ENCODE measurements at regions of chr12 and their contacts with region 1.

Region 1: GRCh38 chr12:52069327-52070184 is at the start of gene ATG101:
- DNase-seq: peak; percentile 96
- H3K4me3 ChIP-seq: peak within 1 kb of the TSS; percentile 82 to 90
- H3K27ac ChIP-seq: peak within 1 kb of the TSS; percentile 87 to 94
- H3K4me1 ChIP-seq: peaks cover 10 to 24% of the 10 kb centered on the region in 2 experiments; a peak in 1 of 4 replicates
- H3K27me3 ChIP-seq: no peaks in the 10 kb centered on the region
- CTCF ChIP-seq: peak; percentile 74
- EP300 ChIP-seq: peak; percentile 20 to 62; a peak in 2 of 4 replicates
- RAD21 ChIP-seq: no peak; the same call in 1 of the 2 replicates
- polyA plus RNA-seq, gene ATG101: 160 and 170 TPM in 2 replicates

Region 2: DNA sequence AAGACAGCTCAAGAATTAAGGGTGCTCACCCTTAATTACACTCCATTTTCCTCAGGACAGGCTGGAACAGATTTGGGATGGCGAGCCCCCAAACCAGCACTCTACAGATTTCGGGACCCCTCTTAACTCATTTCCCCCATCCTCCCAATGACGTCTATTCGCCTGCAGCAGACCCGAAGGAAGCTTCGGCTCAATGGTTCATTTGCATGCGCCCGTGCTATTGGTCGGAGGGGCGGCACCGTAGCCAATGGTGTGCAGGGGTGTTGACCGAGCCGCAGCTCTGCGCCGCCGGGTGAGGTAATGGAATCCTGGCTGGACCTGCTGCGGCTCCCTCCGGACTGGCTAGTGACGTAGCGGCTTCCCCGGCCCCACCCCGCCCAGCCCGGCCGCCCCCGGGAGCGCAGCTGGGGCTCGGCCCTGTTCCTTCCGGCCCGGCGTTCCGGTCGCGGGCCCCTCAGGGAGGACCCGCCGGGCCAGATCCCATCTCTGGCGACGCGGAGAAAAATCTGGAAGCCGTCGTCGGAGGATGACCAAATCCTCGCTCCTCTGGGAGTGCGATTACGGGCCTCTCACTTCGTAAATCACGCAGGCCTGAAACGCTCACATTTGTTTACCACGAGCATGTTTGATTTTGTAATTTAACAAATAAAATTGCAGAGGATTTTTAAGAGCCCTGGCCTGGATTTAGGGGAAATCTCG is 36.6 kb before region 1 on chr12:
- CTCF ChIA-PET with region 1: interaction called, 949 read pairs
- POLR2A ChIA-PET with region 1: interaction called, 10 read pairs
- DNase-seq: peak; percentile 96
- H3K4me3 ChIP-seq: peak overlapping the region; percentile 46 to 53
- H3K27ac ChIP-seq: peak overlapping the region; percentile 82 to 94
- H3K4me1 ChIP-seq: peaks cover 0 to 27% of the 10 kb centered on the region in 2 experiments; a peak in 2 of 4 replicates
- H3K27me3 ChIP-seq: no peaks in the 10 kb centered on the region
- CTCF ChIP-seq: no peak
- EP300 ChIP-seq: no peak
- RAD21 ChIP-seq: no peak

Region 3: DNA sequence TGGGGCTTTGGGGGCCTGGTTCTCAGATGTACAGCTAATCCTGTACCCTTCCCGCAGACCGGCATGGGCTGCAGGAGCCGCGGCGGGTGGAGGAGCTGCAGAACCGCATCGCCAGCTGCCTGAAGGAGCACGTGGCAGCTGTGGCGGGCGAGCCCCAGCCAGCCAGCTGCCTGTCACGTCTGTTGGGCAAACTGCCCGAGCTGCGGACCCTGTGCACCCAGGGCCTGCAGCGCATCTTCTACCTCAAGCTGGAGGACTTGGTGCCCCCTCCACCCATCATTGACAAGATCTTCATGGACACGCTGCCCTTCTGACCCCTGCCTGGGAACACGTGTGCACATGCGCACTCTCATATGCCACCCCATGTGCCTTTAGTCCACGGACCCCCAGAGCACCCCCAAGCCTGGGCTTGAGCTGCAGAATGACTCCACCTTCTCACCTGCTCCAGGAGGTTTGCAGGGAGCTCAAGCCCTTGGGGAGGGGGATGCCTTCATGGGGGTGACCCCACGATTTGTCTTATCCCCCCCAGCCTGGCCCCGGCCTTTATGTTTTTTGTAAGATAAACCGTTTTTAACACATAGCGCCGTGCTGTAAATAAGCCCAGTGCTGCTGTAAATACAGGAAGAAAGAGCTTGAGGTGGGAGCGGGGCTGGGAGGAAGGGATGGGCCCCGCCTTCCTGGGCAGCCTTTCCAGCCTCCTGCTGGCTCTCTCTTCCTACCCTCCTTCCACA is 10.8 kb before region 1 on chr12:
- CTCF ChIA-PET with region 1: interaction called, 17 read pairs
- POLR2A ChIA-PET with region 1: interaction called, 3 read pairs
- DNase-seq: no peak
- H3K4me3 ChIP-seq: no peak overlapping the region
- H3K27ac ChIP-seq: no peak overlapping the region
- H3K4me1 ChIP-seq: peaks cover 0 to 30% of the 10 kb centered on the region in 2 experiments; a peak in 1 of 4 replicates
- H3K27me3 ChIP-seq: no peaks in the 10 kb centered on the region
- CTCF ChIP-seq: no peak
- EP300 ChIP-seq: no peak
- RAD21 ChIP-seq: no peak

Region 4: GRCh38 chr12:52082988-52083637 is 13.6 kb after region 1 on chr12:
- CTCF ChIA-PET with region 1: interaction called, 61 read pairs
- POLR2A ChIA-PET with region 1: interaction called, 5 read pairs
- DNase-seq: peak; percentile 92
- H3K4me3 ChIP-seq: no peak overlapping the region; a peak in 1 of 4 replicates
- H3K27ac ChIP-seq: peak overlapping the region in 1 of 2 experiments; percentile 3; a peak in 1 of 4 replicates
- H3K4me1 ChIP-seq: peaks cover 0 to 28% of the 10 kb centered on the region in 2 experiments; a peak in 1 of 4 replicates
- H3K27me3 ChIP-seq: no peaks in the 10 kb centered on the region
- CTCF ChIP-seq: peak; percentile 99
- EP300 ChIP-seq: no peak
- RAD21 ChIP-seq: peak; percentile 80